ENCODE measurements at regions of chr2 and their contacts with region 1.

Region 1: DNA sequence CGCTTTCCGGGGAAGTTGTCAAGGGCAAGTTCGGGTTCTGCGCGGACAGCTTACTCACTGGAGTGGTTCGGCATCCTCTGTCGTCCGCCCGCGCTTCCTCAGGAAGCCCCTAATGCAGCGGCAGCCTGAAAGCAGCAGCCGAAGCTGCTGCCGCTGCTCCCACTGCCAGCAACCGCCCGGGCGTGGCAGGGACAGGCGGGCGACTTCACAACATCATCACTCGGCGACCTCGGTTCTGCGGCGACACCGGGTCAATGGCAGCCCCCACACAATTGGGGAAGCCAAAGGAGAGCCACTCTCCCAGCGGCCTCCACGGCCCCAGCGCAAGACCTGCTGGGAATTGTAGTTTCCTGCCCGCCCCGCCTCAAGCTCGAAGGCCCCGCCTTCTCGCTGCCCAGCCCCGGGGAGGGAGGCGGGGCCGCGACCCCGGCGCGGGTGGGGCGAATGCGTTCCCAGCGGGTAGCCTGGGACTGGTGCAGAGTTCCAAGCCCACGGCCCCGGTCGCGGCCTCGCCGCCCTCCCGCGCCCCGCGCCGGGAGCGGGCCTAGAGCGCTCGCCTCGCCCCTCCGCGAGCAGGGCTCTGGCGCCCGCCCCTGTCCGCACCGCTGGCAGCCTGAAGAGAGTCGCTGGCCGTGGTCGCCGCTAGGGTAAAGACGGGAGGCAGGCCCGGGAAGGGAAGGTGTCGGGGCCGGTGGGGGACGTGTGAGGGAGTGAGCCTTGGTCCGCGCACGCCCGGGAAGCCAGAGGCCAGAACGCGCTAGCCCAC is at the starts of genes STRADB and TRAK2:
- DNase-seq: peak; percentile 91
- H3K4me3 ChIP-seq: peak within 1 kb of the TSS; percentile 60 to 93 (median 88)
- H3K27ac ChIP-seq: peak within 1 kb of the TSS; percentile 72
- H3K4me1 ChIP-seq: peaks cover 20% of the 10 kb centered on the region
- H3K27me3 ChIP-seq: no peaks in the 10 kb centered on the region
- CTCF ChIP-seq: no peak
- total RNA-seq, gene STRADB: 12.8 to 19.2 TPM
- total RNA-seq, gene TRAK2: 18.9 to 28.7 TPM

Region 2: GRCh38 chr2:200944467-200945394 is 506.7 kb before region 1 on chr2:
- CTCF ChIA-PET with region 1: no interaction called
- dilution Hi-C with region 1: no loop called
- in situ Hi-C with region 1: no loop called
- intact Hi-C with region 1: no loop called
- DNase-seq: peak; percentile 90
- H3K4me3 ChIP-seq: no peak overlapping the region
- H3K27ac ChIP-seq: peak overlapping the region; percentile 64
- H3K4me1 ChIP-seq: peaks cover 11% of the 10 kb centered on the region
- H3K27me3 ChIP-seq: no peaks in the 10 kb centered on the region
- CTCF ChIP-seq: no peak

Region 3: DNA sequence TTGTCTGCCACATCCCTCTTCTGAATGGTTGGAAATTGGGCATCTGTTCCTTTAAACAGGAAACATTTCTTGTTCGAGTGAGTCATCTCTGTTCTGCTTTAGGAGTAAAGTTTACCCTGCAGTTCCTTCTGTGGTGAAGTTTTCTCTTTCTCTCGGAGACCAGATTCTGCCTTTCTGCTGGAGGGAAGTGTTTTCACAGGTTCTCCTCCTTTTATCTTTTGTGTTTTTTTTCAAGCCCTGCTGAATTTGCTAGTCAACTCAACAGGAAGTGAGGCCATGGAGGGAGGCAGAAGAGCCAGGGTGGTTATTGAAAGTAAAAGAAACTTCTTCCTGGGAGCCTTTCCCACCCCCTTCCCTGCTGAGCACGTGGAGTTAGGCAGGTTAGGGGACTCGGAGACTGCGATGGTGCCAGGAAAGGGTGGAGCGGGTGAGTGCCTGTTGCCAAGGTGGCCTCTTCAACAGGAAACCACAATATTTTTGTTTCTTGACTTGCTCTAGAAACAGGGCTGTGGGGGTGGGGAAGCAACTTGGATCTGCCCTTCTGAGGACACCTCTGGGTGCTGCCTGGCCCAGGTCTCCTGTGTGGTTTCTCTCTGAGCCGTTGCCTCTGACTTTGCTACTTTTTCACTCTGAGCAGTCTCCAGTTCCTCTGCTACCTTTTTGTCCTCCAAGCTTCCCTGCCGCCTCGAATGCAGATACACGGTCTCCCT is 193.4 kb before region 1 on chr2:
- CTCF ChIA-PET with region 1: no interaction called
- dilution Hi-C with region 1: no loop called
- in situ Hi-C with region 1: no loop called
- intact Hi-C with region 1: loop called (anchors 1 kb)
- DNase-seq: peak; percentile 91
- H3K4me3 ChIP-seq: peak overlapping the region; percentile 50 to 57 (median 54)
- H3K27ac ChIP-seq: peak overlapping the region; percentile 96
- H3K4me1 ChIP-seq: peaks cover 24% of the 10 kb centered on the region
- H3K27me3 ChIP-seq: no peaks in the 10 kb centered on the region
- CTCF ChIP-seq: peak in 1 of 2 donors; percentile 28

Region 4: GRCh38 chr2:201420442-201421113 is 30.9 kb before region 1 on chr2:
- CTCF ChIA-PET with region 1: no interaction called
- dilution Hi-C with region 1: no loop called
- in situ Hi-C with region 1: no loop called
- intact Hi-C with region 1: loop called (anchors 1 kb)
- DNase-seq: peak; percentile 86
- H3K4me3 ChIP-seq: no peak overlapping the region
- H3K27ac ChIP-seq: peak overlapping the region; percentile 16
- H3K4me1 ChIP-seq: peaks cover 7% of the 10 kb centered on the region
- H3K27me3 ChIP-seq: no peaks in the 10 kb centered on the region
- CTCF ChIP-seq: no peak

Region 5: DNA sequence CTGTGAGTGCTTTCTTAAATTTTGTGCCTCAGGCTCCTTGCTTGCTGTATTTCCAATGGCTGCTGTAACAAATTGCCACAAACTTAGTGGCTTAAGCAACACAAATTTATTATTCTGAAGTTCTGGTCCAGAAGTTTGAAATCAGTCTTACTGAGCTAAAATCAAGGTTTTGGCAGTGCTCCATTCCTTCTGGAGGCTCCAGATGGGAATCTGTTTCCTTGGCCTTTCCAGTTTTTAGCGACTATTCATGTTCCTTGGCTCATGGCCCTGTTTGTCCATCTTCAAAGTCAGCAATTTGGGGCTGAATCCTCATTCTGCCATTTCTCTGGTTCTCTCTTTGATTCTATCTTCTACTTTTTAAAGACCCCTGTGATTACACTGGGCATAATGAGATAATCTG is 31.9 kb after region 1 on chr2:
- CTCF ChIA-PET with region 1: no interaction called
- dilution Hi-C with region 1: no loop called
- in situ Hi-C with region 1: no loop called
- intact Hi-C with region 1: no loop called
- DNase-seq: no peak
- H3K4me3 ChIP-seq: no peak overlapping the region
- H3K27ac ChIP-seq: no peak overlapping the region
- H3K4me1 ChIP-seq: no peaks in the 10 kb centered on the region
- H3K27me3 ChIP-seq: no peaks in the 10 kb centered on the region
- CTCF ChIP-seq: no peak

Region 6: DNA sequence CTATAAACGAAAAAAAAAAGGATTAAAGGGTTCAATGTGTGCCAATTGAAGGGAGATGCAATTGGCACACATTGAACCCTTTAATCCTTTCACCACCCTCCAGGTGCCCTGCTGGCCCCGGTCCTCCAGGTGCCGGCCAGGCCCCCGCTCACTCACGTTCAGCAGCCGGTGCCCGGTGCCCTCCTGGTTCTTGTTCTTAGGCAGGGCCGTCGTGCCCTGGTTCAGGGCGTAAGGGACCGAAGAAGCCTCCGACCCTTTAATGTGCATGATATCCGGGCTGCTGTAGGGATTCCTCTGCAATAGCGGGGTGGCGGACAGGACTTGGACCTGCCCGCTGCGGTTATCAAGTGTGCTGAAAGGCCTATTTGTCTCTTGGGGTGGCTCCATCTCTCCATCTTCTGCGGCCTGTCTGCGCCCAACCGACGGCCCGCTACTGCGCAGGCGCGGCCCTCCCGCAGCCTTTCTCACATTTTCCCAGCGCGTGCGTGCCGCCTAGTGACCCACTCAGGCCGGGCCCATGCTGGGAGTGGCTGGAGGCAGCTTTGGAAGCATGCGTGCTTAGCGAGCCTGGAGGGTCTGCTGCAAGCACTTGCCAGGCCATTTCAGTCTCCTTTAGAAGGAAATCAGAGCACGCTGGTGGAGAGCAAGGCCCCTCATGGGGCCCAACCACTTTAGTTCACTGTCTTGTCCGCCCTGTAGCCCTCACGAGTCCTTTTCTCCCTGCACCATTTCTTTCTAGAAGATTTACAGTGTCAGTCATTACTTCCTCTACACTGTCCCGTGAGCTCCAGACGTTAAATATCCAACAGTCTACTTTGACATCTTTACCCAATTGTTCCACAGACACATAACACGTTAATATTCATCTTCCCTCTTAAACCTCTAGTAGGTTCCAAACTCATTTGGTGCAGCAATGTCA is 167.5 kb after region 1 on chr2:
- CTCF ChIA-PET with region 1: no interaction called
- dilution Hi-C with region 1: no loop called
- in situ Hi-C with region 1: no loop called
- intact Hi-C with region 1: loop called (anchors 1 kb)
- DNase-seq: no peak
- H3K4me3 ChIP-seq: peak overlapping the region in 1 of 3 experiments; percentile 10
- H3K27ac ChIP-seq: no peak overlapping the region
- H3K4me1 ChIP-seq: no peaks in the 10 kb centered on the region
- H3K27me3 ChIP-seq: no peaks in the 10 kb centered on the region
- CTCF ChIP-seq: peak in 1 of 2 donors; percentile 34

Region 7: DNA sequence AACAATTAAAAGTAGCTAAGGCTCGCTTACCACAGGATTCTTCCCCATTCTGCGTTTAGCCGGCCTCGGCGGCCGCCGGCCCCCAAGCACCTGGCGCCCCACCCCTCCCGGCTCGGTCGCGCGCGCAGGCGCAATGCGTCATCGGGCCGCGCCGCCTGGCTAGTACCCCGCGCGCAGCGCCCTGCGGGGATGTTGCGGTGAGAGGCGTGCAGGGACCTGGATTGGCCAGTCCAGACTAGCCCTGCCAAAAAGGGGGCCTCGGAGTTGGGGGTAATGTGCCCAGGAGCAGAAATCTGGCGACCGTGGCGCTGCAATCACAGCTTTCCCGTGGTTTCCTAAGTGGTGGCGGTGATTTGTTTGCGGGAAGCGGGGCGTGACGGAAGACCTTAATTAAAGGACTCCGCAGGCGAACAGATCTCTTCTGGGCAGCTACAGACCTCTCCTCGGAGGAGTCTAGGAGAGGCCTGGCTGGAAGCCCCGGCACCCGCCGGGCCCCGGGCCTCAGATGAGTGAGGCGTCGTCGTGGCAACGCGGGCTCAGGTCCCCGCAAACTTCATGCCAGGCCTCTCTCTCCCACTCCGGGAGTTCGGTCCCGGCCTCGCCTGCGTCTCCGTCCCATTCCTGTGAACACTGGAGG is 191.2 kb after region 1 on chr2:
- CTCF ChIA-PET with region 1: no interaction called
- dilution Hi-C with region 1: no loop called
- in situ Hi-C with region 1: no loop called
- intact Hi-C with region 1: loop called (anchors 5 kb)
- DNase-seq: peak; percentile 81
- H3K4me3 ChIP-seq: peak overlapping the region; percentile 65 to 97 (median 69)
- H3K27ac ChIP-seq: peak overlapping the region; percentile 74
- H3K4me1 ChIP-seq: peaks cover 19% of the 10 kb centered on the region
- H3K27me3 ChIP-seq: no peaks in the 10 kb centered on the region
- CTCF ChIP-seq: no peak